ENCODE measurements at regions of chr6 and their contacts with region 1.

Region 1: DNA sequence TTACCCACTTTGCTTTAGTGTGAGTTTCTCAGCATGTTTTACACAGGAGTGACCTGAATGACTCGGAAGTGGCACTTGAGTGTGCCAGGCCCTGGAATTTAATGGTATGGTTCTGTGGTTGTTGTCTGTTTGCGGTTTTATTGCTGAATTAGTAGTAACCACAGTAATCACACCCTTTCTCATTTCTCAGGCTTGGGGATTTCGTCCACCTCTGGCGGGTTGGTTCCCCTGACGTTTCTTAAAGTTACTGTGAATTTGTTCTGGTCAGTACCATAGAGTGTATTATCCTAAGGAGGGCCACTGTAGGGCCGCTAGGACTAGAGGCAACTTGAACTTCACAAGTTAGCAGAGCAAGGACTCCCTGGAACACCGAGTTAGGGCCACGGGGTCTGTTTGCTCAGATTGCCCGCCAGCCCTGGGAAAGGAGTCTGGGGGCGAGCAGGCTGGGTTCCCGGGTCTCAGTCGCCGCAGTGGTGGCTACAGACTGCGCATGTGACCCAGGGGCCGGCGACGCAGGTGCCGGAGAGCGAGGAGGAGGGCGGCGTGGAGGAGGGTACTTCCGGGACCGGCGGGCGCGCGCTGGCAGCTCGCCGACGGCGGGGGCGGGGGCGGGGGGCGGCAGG is 546 bp upstream of the KLHL32 start:
- DNase-seq: no peak
- H3K4me3 Mint-ChIP-seq: peak overlapping the region; percentile 90
- H3K27ac Mint-ChIP-seq: peak overlapping the region; percentile 75
- H3K4me1 Mint-ChIP-seq: peaks cover 37% of the 10 kb centered on the region
- H3K27me3 Mint-ChIP-seq: no peaks in the 10 kb centered on the region

Region 2: DNA sequence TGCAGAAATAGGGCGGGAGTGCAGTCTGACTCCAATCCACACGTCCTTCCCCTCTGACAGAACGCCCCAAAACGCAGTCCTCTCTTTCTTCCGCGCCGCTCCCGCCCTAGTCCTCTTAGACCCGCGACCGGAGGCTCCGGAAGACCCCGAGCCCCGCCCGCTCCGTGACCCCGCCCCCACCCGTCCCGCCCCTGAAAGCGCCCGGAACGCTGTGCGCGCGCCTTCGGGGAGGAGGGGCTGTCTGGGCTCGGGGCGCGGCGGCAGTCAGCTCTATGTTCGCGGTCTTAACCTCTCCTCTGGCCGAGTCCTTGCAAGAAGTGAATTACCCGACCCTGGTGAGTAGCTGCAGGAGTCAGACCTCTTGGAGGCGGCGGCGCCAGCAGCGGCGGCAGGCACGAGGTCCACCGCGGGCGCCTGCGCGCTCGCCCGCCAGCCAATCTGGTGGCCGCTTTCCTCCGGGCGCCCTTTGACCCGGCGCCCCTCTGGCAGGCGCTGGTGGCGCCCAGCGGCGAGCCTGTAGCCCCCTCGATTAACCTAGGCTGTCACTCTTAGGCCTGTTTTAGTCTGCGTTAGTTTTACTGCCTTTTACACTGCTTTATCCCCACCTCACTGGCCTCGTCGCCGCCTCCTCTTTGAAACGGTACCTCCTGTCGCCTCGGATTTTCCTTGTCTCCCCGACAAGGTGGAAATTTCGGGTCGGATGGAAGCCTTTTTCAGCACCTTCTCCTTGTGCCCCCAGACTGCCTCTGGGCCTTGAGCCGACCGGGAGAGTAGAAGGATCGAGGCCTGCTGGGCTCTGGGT is 1346.5 kb before region 1 on chr6 and contains the start of gene MANEA:
- CTCF ChIA-PET with region 1: no interaction called
- intact Hi-C with region 1: loop called (anchors 2 kb)
- DNase-seq: peak; percentile 80
- H3K4me3 Mint-ChIP-seq: peak within 1 kb of the TSS; percentile 96
- H3K27ac Mint-ChIP-seq: peak within 1 kb of the TSS; percentile 98
- H3K4me1 Mint-ChIP-seq: peaks cover 36% of the 10 kb centered on the region
- H3K27me3 Mint-ChIP-seq: no peaks in the 10 kb centered on the region
- total RNA-seq, gene MANEA: 14.0 to 16.0 TPM

Region 3: DNA sequence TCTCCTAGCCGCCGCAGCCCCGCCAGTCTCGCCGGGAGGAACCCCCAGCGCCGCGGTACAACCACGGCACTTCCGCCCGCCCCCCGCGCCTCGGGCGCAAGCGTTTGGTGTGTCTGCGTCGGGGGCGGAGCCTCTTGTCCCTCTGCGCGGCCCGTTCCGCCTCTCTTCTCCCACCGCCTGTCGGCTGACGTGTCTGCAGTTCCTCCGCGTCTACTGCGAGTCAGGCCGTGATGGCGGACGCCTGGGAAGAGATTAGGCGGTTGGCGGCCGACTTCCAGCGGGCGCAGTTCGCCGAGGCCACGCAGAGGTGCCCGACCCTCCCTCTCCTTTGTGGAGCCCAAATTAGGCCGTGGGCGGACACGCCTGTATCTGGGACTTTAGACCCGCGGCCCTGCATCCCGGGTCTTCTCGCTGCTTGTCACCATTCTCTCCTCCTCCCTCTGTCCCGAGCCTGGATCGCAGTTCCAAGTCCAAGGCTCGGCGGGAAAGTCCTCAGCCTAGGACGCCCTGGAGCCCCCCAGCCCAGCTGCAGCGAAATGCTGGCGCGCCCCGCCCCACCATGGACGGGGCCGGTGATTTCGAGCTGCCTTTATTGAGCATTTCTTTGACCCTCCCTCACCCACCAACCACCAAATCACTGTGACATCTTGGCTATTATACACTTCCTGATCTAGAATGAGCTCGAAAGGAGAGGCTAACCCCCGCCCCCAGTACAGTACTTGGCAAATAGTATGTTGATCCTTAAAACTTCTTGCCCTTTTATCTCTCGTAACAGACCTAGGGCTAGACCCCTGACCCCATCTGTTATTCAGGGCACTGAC is 402.1 kb before region 1 on chr6 and contains the start of gene UFL1:
- CTCF ChIA-PET with region 1: no interaction called
- intact Hi-C with region 1: loop called (anchors 1 kb)
- DNase-seq: peak; percentile 92
- H3K4me3 Mint-ChIP-seq: peak within 1 kb of the TSS; percentile 98
- H3K27ac Mint-ChIP-seq: peak within 1 kb of the TSS; percentile 99
- H3K4me1 Mint-ChIP-seq: peaks cover 13% of the 10 kb centered on the region
- H3K27me3 Mint-ChIP-seq: no peaks in the 10 kb centered on the region
- total RNA-seq, gene UFL1: 28.3 to 28.7 TPM

Region 4: DNA sequence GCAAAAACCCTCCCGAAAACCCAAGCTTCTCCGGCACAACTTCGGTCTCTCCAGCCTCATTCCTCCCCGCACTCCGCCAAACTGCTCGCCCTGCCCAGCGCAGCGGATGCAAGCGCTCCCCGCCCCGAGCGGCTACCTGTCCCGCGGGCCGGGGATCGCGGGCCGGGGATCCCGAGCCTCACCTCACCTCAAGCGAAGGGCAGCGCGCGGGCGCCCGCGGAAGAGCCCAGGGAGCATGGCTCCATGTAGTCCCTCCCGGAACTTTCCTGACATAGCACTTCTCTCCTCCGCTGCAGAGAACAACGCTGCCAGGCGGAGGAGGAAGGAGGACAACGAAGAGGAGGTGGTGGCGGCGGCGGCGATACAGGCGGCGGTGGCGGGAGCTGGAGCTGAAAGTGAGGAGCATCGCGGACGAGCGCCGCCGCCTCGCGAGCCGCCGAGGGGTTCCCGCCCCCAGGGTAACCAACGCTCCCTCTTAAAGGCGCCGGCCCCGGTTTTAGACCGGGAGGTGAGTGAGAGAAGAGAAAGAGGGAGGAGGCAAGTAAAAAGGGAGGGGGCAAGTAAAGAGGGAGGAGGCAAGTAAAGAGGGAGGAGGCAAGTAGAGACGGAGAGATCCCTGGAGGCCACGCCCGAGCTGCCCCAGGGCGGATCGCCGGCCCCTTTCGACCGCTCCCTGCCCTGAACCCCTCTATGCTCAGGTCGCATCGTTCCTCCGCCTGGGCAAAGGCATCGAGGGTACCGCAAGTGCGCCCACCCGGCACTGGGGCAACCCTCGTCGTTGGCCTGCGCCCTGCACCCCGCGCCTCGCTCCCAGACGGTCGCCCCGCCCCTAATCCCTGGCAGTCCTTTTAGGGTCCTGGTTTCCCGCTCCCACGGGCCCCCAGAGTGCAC is 86.7 kb before region 1 on chr6 and contains the start of gene GPR63:
- CTCF ChIA-PET with region 1: interaction called, 3 read pairs
- intact Hi-C with region 1: loop called (anchors 1 kb)
- DNase-seq: peak; percentile 75
- H3K4me3 Mint-ChIP-seq: peak within 1 kb of the TSS; percentile 82
- H3K27ac Mint-ChIP-seq: no peak within 1 kb of the TSS
- H3K4me1 Mint-ChIP-seq: peaks cover 10% of the 10 kb centered on the region
- H3K27me3 Mint-ChIP-seq: peaks cover 54% of the 10 kb centered on the region
- total RNA-seq, gene GPR63: 0.72 to 0.81 TPM

Region 5: GRCh38 chr6:96907498-96907897 is 16.5 kb before region 1 on chr6:
- CTCF ChIA-PET with region 1: interaction called, 12 read pairs
- intact Hi-C with region 1: loop called (anchors 1 kb)
- DNase-seq: peak; percentile 79
- H3K4me3 Mint-ChIP-seq: no peak overlapping the region
- H3K27ac Mint-ChIP-seq: peak overlapping the region; percentile 72
- H3K4me1 Mint-ChIP-seq: peaks cover 24% of the 10 kb centered on the region
- H3K27me3 Mint-ChIP-seq: peaks cover 22% of the 10 kb centered on the region

Region 6: GRCh38 chr6:96939007-96939805 is 15.2 kb after region 1 on chr6:
- CTCF ChIA-PET with region 1: no interaction called
- intact Hi-C with region 1: loop called (anchors 1 kb)
- DNase-seq: peak; percentile 59
- H3K4me3 Mint-ChIP-seq: no peak overlapping the region
- H3K27ac Mint-ChIP-seq: no peak overlapping the region
- H3K4me1 Mint-ChIP-seq: peaks cover 8% of the 10 kb centered on the region
- H3K27me3 Mint-ChIP-seq: no peaks in the 10 kb centered on the region

Region 7: DNA sequence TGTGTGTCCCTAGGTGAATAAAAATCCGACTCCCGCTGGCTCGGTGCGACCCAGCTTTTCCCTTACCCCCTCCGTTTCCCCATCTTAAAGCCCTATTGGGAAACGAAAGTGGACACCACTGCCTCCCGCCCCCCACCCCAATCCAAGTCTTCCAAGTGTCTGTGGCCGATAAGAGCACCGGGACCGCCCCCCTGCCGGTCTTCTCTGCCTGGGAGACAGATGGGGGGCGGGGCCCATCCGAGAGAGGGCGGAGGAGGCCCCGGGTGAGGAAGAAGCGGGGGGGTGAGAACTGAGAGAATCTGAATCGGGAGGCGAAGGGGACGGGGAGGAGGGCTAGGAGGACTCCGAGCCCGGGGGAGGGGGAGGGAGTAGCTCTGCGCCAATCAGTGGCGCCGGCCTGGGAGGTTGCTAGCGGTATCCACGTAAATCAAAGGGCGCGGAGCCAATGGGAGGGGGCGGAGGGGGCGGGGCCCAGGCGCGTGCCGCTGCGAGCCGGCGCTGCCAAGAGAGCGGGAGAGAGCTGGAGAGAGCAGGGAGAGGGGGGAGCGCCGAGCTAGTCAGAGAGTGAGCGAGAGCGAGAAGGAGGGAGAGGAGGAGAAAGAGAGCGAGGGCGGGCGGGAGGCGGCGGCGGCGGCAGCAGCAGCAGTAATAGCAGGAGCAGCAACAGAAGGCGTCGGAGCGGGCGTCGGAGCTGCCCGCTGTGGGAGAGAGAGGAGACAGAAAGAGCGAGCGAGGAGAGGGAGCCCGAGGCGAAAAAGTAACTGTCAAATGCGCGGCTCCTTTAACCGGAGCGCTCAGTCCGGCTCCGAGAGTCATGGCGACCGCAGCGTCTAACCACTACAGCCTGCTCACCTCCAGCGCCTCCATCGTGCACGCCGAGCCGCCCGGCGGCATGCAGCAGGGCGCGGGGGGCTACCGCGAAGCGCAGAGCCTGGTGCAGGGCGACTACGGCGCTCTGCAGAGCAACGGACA is 1910.4 kb after region 1 on chr6 and contains the start of gene POU3F2:
- CTCF ChIA-PET with region 1: no interaction called
- intact Hi-C with region 1: loop called (anchors 10 kb)
- DNase-seq: peak; percentile 78
- H3K4me3 Mint-ChIP-seq: peak within 1 kb of the TSS; percentile 73
- H3K27ac Mint-ChIP-seq: no peak within 1 kb of the TSS
- H3K4me1 Mint-ChIP-seq: peaks cover 34% of the 10 kb centered on the region
- H3K27me3 Mint-ChIP-seq: peaks cover 72% of the 10 kb centered on the region
- total RNA-seq, gene POU3F2: not detected